ENCODE measurements at regions of chr19 and their contacts with region 1.

Region 1: DNA sequence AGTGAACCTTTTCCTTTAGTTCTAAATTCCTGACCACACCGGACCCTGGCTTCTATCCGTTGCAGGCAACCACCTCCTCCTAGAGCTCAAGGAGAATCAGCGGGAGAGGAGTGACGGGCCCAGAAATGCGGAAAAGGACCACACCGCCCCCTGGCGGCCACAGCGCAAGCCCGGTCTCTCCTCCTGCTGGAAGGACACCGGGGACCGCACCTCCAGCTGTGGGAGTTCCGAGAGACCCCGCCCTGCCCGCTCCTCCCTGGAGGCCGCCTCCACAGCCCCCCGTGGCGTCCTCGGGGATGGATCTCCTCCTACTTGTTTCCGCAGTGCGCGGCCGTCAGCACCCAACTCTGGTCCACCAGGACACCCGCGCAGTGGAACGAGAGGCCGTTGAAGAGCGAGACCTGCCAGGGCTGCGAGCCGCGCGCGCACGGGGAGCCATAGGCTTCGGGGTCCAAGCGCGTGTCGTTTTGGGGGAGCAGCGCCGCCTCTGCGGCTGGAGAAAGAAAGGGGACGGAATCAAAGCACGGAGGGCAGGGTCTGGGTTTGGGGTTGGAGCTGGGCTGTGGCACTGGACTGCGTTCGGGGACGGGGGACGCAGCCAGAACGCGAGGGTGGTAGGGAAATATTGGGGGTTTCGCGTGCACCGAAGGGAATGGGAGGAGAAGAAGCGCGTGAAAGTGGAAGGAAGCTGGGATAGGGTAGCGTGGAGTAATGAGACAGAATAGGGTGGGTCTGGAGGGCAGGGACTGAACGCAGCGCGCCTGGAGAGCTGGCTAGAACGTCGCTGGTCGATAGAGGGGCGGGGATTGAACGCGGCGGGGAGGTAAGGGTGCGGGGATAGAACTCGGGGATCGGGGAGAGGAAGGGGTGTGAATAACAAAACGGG is 2.5 kb downstream of the KLK10 start:
- DNase-seq: peak; percentile 39
- H3K4me3 ChIP-seq: no peak overlapping the region
- H3K27ac ChIP-seq: no peak overlapping the region
- H3K4me1 ChIP-seq: no peaks in the 10 kb centered on the region
- H3K27me3 ChIP-seq: peaks cover 21 to 25% of the 10 kb centered on the region in 2 experiments
- CTCF ChIP-seq: peak; percentile 79 to 91
- POLR2A ChIP-seq: no peak

Region 2: GRCh38 chr19:50329146-50329925 is 687.7 kb before region 1 on chr19 and contains the start of gene KCNC3:
- CTCF ChIA-PET with region 1: no interaction called
- POLR2A ChIA-PET with region 1: no interaction called
- dilution Hi-C with region 1: no loop called
- intact Hi-C with region 1: no loop called
- DNase-seq: peak; percentile 99
- H3K4me3 ChIP-seq: peak within 1 kb of the TSS; percentile 28 to 42 (median 31)
- H3K27ac ChIP-seq: no peak within 1 kb of the TSS
- H3K4me1 ChIP-seq: peaks cover 9% of the 10 kb centered on the region
- H3K27me3 ChIP-seq: peaks cover 32 to 35% of the 10 kb centered on the region in 2 experiments
- CTCF ChIP-seq: no peak
- POLR2A ChIP-seq: no peak
- total RNA-seq, gene KCNC3: 0.76 and 0.91 TPM in 2 replicates

Region 3: GRCh38 chr19:50933640-50934039 is 83.4 kb before region 1 on chr19:
- CTCF ChIA-PET with region 1: interaction called, 35 read pairs
- POLR2A ChIA-PET with region 1: no interaction called
- dilution Hi-C with region 1: no loop called
- intact Hi-C with region 1: loop called (anchors 1 kb)
- DNase-seq: no peak
- H3K4me3 ChIP-seq: no peak overlapping the region
- H3K27ac ChIP-seq: no peak overlapping the region
- H3K4me1 ChIP-seq: no peaks in the 10 kb centered on the region
- H3K27me3 ChIP-seq: peaks cover 0 to 2% of the 10 kb centered on the region in 2 experiments
- CTCF ChIP-seq: no peak
- POLR2A ChIP-seq: no peak

Region 4: GRCh38 chr19:51027126-51027806 is 10.2 kb after region 1 on chr19:
- CTCF ChIA-PET with region 1: interaction called, 11 read pairs
- POLR2A ChIA-PET with region 1: no interaction called
- dilution Hi-C with region 1: no loop called
- intact Hi-C with region 1: no loop called
- DNase-seq: no peak
- H3K4me3 ChIP-seq: no peak overlapping the region
- H3K27ac ChIP-seq: no peak overlapping the region
- H3K4me1 ChIP-seq: no peaks in the 10 kb centered on the region
- H3K27me3 ChIP-seq: no peaks in the 10 kb centered on the region
- CTCF ChIP-seq: no peak
- POLR2A ChIP-seq: no peak

Region 5: DNA sequence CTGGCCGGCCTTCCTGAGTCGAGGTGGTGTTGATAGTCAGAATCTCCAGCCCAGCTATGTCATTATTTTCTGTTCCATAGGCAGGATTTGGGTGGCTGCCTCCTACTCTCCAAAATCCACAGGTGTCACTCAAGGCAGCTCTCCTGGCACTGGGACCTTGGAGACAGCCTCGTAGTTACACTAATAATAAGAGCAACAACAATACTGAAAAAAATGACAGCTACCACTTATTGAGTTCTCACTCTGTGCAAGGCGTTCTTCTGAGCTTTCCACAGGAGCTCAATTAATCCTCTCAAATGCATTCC is 29.9 kb after region 1 on chr19:
- CTCF ChIA-PET with region 1: interaction called, 13 read pairs
- POLR2A ChIA-PET with region 1: no interaction called
- dilution Hi-C with region 1: no loop called
- intact Hi-C with region 1: no loop called
- DNase-seq: no peak
- H3K4me3 ChIP-seq: no peak overlapping the region
- H3K27ac ChIP-seq: no peak overlapping the region
- H3K4me1 ChIP-seq: no peaks in the 10 kb centered on the region
- H3K27me3 ChIP-seq: no peaks in the 10 kb centered on the region
- CTCF ChIP-seq: no peak
- POLR2A ChIP-seq: no peak

Region 6: GRCh38 chr19:51097166-51097738 is 80.2 kb after region 1 on chr19:
- CTCF ChIA-PET with region 1: interaction called, 73 read pairs
- POLR2A ChIA-PET with region 1: no interaction called
- dilution Hi-C with region 1: no loop called
- intact Hi-C with region 1: loop called (anchors 1 kb)
- DNase-seq: peak; percentile 27
- H3K4me3 ChIP-seq: no peak overlapping the region
- H3K27ac ChIP-seq: no peak overlapping the region
- H3K4me1 ChIP-seq: peaks cover 16% of the 10 kb centered on the region
- H3K27me3 ChIP-seq: no peaks in the 10 kb centered on the region
- CTCF ChIP-seq: peak; percentile 47 to 69
- POLR2A ChIP-seq: no peak

Region 7: GRCh38 chr19:51147663-51148062 is 130.6 kb after region 1 on chr19:
- CTCF ChIA-PET with region 1: no interaction called
- POLR2A ChIA-PET with region 1: no interaction called
- dilution Hi-C with region 1: no loop called
- intact Hi-C with region 1: no loop called
- DNase-seq: no peak
- H3K4me3 ChIP-seq: no peak overlapping the region
- H3K27ac ChIP-seq: no peak overlapping the region
- H3K4me1 ChIP-seq: no peaks in the 10 kb centered on the region
- H3K27me3 ChIP-seq: no peaks in the 10 kb centered on the region
- CTCF ChIP-seq: no peak
- POLR2A ChIP-seq: no peak

Region 8: GRCh38 chr19:51166846-51167490 is 149.9 kb after region 1 on chr19:
- CTCF ChIA-PET with region 1: interaction called, 17 read pairs
- POLR2A ChIA-PET with region 1: no interaction called
- dilution Hi-C with region 1: no loop called
- intact Hi-C with region 1: loop called (anchors 1 kb)
- DNase-seq: no peak
- H3K4me3 ChIP-seq: no peak overlapping the region
- H3K27ac ChIP-seq: no peak overlapping the region
- H3K4me1 ChIP-seq: no peaks in the 10 kb centered on the region
- H3K27me3 ChIP-seq: peaks cover 0 to 4% of the 10 kb centered on the region in 2 experiments
- CTCF ChIP-seq: no peak
- POLR2A ChIP-seq: no peak

Region 9: GRCh38 chr19:51246164-51246552 is 229.1 kb after region 1 on chr19:
- CTCF ChIA-PET with region 1: no interaction called
- POLR2A ChIA-PET with region 1: no interaction called
- dilution Hi-C with region 1: no loop called
- intact Hi-C with region 1: no loop called
- DNase-seq: no peak
- H3K4me3 ChIP-seq: no peak overlapping the region
- H3K27ac ChIP-seq: no peak overlapping the region
- H3K4me1 ChIP-seq: no peaks in the 10 kb centered on the region
- H3K27me3 ChIP-seq: no peaks in the 10 kb centered on the region
- CTCF ChIP-seq: no peak
- POLR2A ChIP-seq: no peak

Region 10: DNA sequence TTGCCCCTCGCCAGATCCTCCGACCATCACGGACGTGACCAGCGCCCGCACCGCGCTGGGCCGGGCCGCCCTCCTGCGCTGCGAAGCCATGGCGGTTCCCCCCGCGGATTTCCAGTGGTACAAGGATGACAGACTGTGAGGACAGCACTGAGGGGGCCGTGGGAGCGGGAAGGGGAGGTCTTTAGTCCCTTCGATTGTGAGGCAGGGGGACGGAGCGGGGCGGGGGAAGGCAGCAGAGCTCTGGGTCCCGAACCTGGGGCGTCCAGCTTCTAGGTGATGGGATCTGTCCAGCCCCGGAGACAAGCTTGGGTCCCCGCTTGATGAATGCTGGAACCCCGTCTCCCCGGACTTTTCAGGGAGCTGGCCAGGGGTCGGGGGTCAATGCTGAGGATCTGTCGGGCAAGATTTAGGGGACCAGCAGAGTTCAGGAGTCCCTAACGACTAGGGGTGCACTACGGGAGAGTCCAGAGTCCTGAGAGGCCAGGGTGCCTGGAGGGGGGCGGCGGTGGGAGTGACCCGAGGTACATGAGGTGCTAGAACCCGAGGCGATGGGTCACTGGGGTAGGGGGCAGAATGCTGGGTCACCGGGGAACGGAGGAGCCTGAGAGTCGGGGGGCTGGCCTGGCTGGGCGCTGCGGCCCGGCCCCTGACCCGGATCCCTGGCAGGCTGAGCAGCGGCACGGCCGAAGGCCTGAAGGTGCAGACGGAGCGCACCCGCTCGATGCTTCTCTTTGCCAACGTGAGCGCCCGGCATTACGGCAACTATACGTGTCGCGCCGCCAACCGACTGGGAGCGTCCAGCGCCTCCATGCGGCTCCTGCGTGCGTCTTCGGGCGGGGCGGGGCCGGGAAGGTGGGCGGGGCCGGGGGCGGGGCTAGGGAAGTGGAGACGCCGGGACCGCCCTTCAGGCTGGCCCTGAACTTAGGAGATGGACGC is 310.3 kb after region 1 on chr19:
- CTCF ChIA-PET with region 1: no interaction called
- POLR2A ChIA-PET with region 1: no interaction called
- dilution Hi-C with region 1: no loop called
- intact Hi-C with region 1: no loop called
- DNase-seq: peak; percentile 30
- H3K4me3 ChIP-seq: peak overlapping the region in 1 of 3 experiments; percentile 15
- H3K27ac ChIP-seq: no peak overlapping the region
- H3K4me1 ChIP-seq: no peaks in the 10 kb centered on the region
- H3K27me3 ChIP-seq: peaks cover 6 to 7% of the 10 kb centered on the region in 2 experiments
- CTCF ChIP-seq: peak in 1 of 2 donors; percentile 20
- POLR2A ChIP-seq: no peak